ENCODE measurements at regions of chr1 and their contacts with region 1.

Region 1: DNA sequence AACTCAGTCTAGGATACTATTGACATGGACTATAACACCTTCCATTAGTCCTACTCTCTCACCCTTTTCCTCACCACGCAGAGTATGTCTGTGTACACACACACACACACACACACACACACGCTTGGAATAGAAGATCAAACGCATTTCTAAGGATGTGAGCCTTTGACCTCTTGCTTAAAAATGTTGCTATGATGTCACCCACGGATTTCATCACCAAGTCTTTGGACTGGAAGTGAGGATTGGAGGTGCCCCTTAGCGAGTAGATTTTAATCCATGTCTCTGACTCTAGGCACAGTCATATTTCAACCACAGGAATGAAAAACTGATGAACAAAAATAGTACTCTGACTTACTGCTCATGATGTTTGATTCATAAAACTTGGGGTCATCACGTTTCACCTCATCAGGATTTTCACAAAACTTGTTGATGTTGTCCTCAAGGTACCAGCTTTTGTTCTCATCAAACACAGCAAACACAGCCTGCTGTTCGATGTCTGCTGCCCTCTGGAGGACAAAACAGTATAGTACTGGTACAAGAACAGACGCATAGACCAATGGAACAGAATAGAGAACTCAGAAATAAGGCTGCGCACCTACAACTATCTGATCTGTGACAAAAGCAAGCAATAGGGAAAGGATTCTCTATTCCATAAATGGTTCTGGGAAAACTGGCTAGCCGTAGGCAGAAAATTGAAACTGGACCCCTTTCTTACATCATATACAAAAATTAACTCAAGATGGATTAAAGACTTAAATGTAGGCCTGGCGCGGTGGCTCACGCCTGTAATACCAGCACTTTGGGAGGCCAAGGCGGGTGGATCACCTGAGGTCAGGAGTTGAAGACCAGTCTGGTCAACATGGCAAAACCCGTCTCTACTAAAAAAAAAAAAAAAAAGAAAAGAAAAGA is 39.9 kb downstream of the F5 start:
- DNase-seq: no peak
- H3K4me3 ChIP-seq: no peak overlapping the region
- H3K27ac ChIP-seq: no peak overlapping the region
- H3K4me1 ChIP-seq: no peaks in the 10 kb centered on the region
- H3K27me3 ChIP-seq: peaks cover 0 to 2% (median 0%) of the 10 kb centered on the region in 4 donors
- CTCF ChIP-seq: peak; percentile 83 to 88 (median 85)
- EP300 ChIP-seq: no peak
- POLR2A ChIP-seq: no peak

Region 2: DNA sequence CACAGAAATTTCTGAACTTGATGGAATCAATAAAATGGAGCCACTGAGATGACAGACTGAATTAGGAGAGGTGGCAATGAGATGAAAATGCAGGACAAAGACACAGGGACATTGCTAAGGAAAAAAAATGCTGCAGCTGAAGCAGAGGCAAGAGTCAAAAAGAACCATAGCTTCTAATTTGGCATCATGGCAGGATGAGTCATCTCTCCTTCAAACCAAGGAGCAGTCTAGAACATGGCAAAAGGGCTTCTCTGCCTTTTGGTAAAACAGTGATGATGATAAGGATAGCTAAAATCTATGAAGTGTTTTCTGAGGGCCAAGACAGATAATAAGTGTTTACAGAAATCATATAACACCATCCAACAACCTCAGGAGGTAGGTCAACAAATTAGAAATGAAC is 77.4 kb before region 1 on chr1:
- intact Hi-C with region 1: loop called (anchors 2 kb)
- DNase-seq: no peak
- H3K4me3 ChIP-seq: no peak overlapping the region
- H3K27ac ChIP-seq: no peak overlapping the region
- H3K4me1 ChIP-seq: peaks cover 0 to 11% (median 0%) of the 10 kb centered on the region in 4 donors
- H3K27me3 ChIP-seq: no peaks in the 10 kb centered on the region
- CTCF ChIP-seq: no peak
- EP300 ChIP-seq: no peak
- POLR2A ChIP-seq: no peak

Region 3: GRCh38 chr1:169711469-169712281 is 165.3 kb after region 1 on chr1 and contains the start of gene SELL:
- intact Hi-C with region 1: loop called (anchors 10 kb)
- DNase-seq: no peak
- H3K4me3 ChIP-seq: peak within 1 kb of the TSS; percentile 14 to 42 (median 20)
- H3K27ac ChIP-seq: no peak within 1 kb of the TSS
- H3K4me1 ChIP-seq: peaks cover 0 to 3% (median 0%) of the 10 kb centered on the region in 4 donors
- H3K27me3 ChIP-seq: peaks cover 0 to 6% (median 0%) of the 10 kb centered on the region in 4 donors
- CTCF ChIP-seq: peak; percentile 53 to 70 (median 58)
- EP300 ChIP-seq: no peak
- POLR2A ChIP-seq: no peak
- total RNA-seq, gene SELL: 0.42 to 11.9 (median 0.86) TPM

Region 4: GRCh38 chr1:169809370-169810095 is 263.2 kb after region 1 on chr1:
- intact Hi-C with region 1: loop called (anchors 5 kb)
- DNase-seq: no peak
- H3K4me3 ChIP-seq: no peak overlapping the region
- H3K27ac ChIP-seq: no peak overlapping the region
- H3K4me1 ChIP-seq: no peaks in the 10 kb centered on the region
- H3K27me3 ChIP-seq: no peaks in the 10 kb centered on the region
- CTCF ChIP-seq: peak; percentile 34 to 52 (median 41)
- EP300 ChIP-seq: no peak
- POLR2A ChIP-seq: no peak

Measured in esophagus muscularis mucosa (tissue), 4 donors.